ENCODE measurements at regions of chr16 and their contacts with region 1.

Region 1: DNA sequence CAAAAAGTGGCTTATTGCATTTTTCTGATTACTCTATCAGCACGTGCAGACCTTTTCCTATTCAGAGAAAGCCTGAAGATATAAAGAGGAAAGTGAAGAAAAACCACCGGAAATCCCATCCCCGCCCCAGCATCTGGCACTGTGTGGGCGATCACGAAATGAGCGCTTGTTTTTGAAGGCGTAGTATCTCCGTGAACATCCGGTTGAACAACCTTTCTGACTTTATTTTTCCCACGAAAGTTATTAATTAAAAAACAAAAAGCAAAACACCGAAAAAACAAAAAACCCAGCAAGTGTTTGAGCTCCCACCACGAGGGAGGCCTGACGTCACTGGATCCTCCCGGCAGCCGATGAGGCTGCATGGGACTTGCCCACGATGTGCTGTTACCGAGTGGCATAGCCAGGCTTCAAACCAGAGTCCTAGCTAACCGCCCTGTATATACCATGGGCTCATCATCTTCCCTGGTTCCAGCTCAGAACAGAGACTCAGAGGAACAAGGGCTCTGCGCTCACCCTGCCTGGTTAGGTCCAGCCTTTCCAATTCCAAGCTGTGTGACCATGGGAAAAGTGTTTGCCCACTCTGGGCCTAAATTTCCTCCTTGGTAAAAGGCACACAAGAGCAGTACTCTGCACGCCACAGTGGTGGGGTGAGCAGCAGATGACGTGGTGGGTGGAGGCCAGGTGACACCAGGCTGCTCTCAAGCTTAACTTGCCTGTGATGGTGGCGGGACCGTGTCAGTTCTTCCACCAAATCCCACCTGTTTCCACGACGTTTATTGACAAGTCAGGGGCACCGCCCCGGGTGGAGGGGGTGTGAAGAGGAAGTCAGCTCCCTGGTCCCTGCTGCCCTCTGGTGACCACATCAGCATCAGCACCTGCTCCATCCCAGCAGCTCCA is 34.3 kb upstream of the IL21R start:
- DNase-seq: peak; percentile 64 to 98 (median 93)
- ATAC-seq: peak; percentile 89
- H3K4me3 ChIP-seq: peak overlapping the region; percentile 45
- H3K4me3 Mint-ChIP-seq: peak overlapping the region; percentile 54 to 86 (median 73)
- H3K27ac ChIP-seq: peak overlapping the region; percentile 99
- H3K27ac Mint-ChIP-seq: peak overlapping the region in 7 of 9 donors; percentile 93 to 100 (median 99)
- H3K4me1 ChIP-seq: peaks cover 26 to 62% of the 10 kb centered on the region in 2 donors
- H3K4me1 Mint-ChIP-seq: peaks cover 15 to 80% (median 73%) of the 10 kb centered on the region in 7 donors
- H3K27me3 ChIP-seq: no peaks in the 10 kb centered on the region
- H3K27me3 Mint-ChIP-seq: no peaks in the 10 kb centered on the region

Region 2: GRCh38 chr16:27154705-27155521 is 212.8 kb before region 1 on chr16:
- CTCF ChIA-PET with region 1: interaction called, 24 read pairs
- POLR2A ChIA-PET with region 1: interaction called, 12 read pairs
- intact Hi-C with region 1: loop called in 1 of 2 experiments (anchors 1 kb)
- DNase-seq: peak; percentile 26 to 74 (median 56)
- ATAC-seq: peak; percentile 90
- H3K4me3 ChIP-seq: no peak overlapping the region
- H3K4me3 Mint-ChIP-seq: peak overlapping the region in 2 of 10 donors; percentile 3 to 16
- H3K27ac ChIP-seq: no peak overlapping the region
- H3K27ac Mint-ChIP-seq: peak overlapping the region in 7 of 9 donors; percentile 18 to 91 (median 61)
- H3K4me1 ChIP-seq: peaks cover 0 to 8% of the 10 kb centered on the region in 2 donors
- H3K4me1 Mint-ChIP-seq: peaks cover 6 to 28% (median 15%) of the 10 kb centered on the region in 7 donors
- H3K27me3 ChIP-seq: no peaks in the 10 kb centered on the region
- H3K27me3 Mint-ChIP-seq: no peaks in the 10 kb centered on the region

Region 3: GRCh38 chr16:27195941-27196595 is 171.6 kb before region 1 on chr16:
- CTCF ChIA-PET with region 1: interaction called, 6 read pairs
- POLR2A ChIA-PET with region 1: interaction called, 42 read pairs
- intact Hi-C with region 1: loop called in 1 of 2 experiments (anchors 1 kb)
- DNase-seq: peak in 7 of 9 donors; percentile 82 to 93 (median 90)
- ATAC-seq: peak; percentile 96
- H3K4me3 ChIP-seq: peak overlapping the region; percentile 41
- H3K4me3 Mint-ChIP-seq: peak overlapping the region; percentile 58 to 80 (median 72)
- H3K27ac ChIP-seq: peak overlapping the region; percentile 73
- H3K27ac Mint-ChIP-seq: peak overlapping the region; percentile 80 to 99 (median 95)
- H3K4me1 ChIP-seq: peaks cover 46 to 70% of the 10 kb centered on the region in 2 donors
- H3K4me1 Mint-ChIP-seq: peaks cover 52 to 83% (median 78%) of the 10 kb centered on the region in 7 donors
- H3K27me3 ChIP-seq: no peaks in the 10 kb centered on the region
- H3K27me3 Mint-ChIP-seq: no peaks in the 10 kb centered on the region

Region 4: DNA sequence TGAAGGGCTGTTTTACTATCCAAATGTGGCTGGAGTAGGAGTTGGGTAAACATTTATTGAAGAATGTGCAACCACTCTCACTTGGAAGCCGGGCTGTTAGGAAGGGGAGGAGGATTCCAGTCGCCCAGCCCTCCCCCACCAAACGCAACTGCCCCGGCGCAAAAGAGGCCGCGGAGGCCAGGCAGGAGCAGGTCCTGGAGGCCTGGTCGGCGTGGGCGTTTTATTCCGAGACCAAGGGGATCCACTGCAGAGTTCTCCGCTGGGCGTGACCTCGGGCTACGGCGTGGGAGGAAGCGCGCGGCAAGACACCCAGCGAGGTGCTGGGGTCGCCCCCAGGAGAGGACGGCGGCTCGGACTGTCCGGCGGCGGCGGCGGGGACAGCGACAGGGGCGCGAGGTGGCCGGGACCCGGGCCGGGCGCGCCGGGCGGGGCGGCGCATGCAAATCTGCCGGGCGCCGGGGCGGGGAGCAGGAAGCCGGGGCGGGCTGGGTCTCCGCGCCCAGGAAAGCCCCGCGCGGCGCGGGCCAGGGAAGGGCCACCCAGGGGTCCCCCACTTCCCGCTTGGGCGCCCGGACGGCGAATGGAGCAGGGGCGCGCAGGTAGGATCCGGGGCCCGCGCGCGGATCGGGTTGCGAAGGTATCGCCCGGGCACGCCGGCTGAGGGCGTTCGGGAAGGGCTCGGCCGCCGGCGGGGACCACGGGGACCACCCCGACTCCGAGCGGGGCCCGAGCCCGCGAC is 54.1 kb before region 1 on chr16 and contains the start of gene IL4R:
- CTCF ChIA-PET with region 1: interaction called, 3 read pairs
- POLR2A ChIA-PET with region 1: interaction called, 19 read pairs
- intact Hi-C with region 1: loop called (anchors 1 kb)
- DNase-seq: peak; percentile 55 to 84 (median 68)
- ATAC-seq: peak; percentile 72
- H3K4me3 ChIP-seq: peak within 1 kb of the TSS; percentile 73
- H3K4me3 Mint-ChIP-seq: peak within 1 kb of the TSS; percentile 87 to 99 (median 97)
- H3K27ac ChIP-seq: peak within 1 kb of the TSS; percentile 99
- H3K27ac Mint-ChIP-seq: peak within 1 kb of the TSS; percentile 92 to 99 (median 96)
- H3K4me1 ChIP-seq: peaks cover 17 to 33% of the 10 kb centered on the region in 2 donors
- H3K4me1 Mint-ChIP-seq: peaks cover 29 to 52% (median 42%) of the 10 kb centered on the region in 7 donors
- H3K27me3 ChIP-seq: no peaks in the 10 kb centered on the region
- H3K27me3 Mint-ChIP-seq: peaks cover 0 to 3% (median 0%) of the 10 kb centered on the region in 5 donors
- total RNA-seq, gene IL4R: 158 to 498 (median 198) TPM

Region 5: GRCh38 chr16:27355610-27356009 is 12.1 kb before region 1 on chr16:
- CTCF ChIA-PET with region 1: interaction called, 28 read pairs
- POLR2A ChIA-PET with region 1: interaction called, 10 read pairs
- intact Hi-C with region 1: no loop called
- DNase-seq: peak in 6 of 9 donors; percentile 25 to 44 (median 37)
- ATAC-seq: peak; percentile 80
- H3K4me3 ChIP-seq: no peak overlapping the region
- H3K4me3 Mint-ChIP-seq: no peak overlapping the region
- H3K27ac ChIP-seq: peak overlapping the region; percentile 29
- H3K27ac Mint-ChIP-seq: peak overlapping the region; percentile 1 to 93 (median 77)
- H3K4me1 ChIP-seq: no peaks in the 10 kb centered on the region
- H3K4me1 Mint-ChIP-seq: peaks cover 13 to 37% (median 25%) of the 10 kb centered on the region in 7 donors
- H3K27me3 ChIP-seq: no peaks in the 10 kb centered on the region
- H3K27me3 Mint-ChIP-seq: no peaks in the 10 kb centered on the region

Region 6: GRCh38 chr16:27455700-27456099 is 88.0 kb after region 1 on chr16:
- CTCF ChIA-PET with region 1: interaction called, 11 read pairs
- POLR2A ChIA-PET with region 1: interaction called, 7 read pairs
- intact Hi-C with region 1: loop called (anchors 1 to 2 kb)
- DNase-seq: peak in 6 of 9 donors; percentile 22 to 47 (median 32)
- ATAC-seq: peak; percentile 18
- H3K4me3 ChIP-seq: no peak overlapping the region
- H3K4me3 Mint-ChIP-seq: peak overlapping the region in 9 of 10 donors; percentile 3 to 75 (median 23)
- H3K27ac ChIP-seq: no peak overlapping the region
- H3K27ac Mint-ChIP-seq: peak overlapping the region; percentile 54 to 87 (median 79)
- H3K4me1 ChIP-seq: peaks cover 24 to 46% of the 10 kb centered on the region in 2 donors
- H3K4me1 Mint-ChIP-seq: peaks cover 30 to 75% (median 51%) of the 10 kb centered on the region in 7 donors
- H3K27me3 ChIP-seq: no peaks in the 10 kb centered on the region
- H3K27me3 Mint-ChIP-seq: no peaks in the 10 kb centered on the region

Region 7: GRCh38 chr16:27549859-27550581 is 182.3 kb after region 1 on chr16 and contains the starts of genes GTF3C1 and KATNIP:
- CTCF ChIA-PET with region 1: no interaction called
- POLR2A ChIA-PET with region 1: no interaction called
- intact Hi-C with region 1: loop called in 1 of 2 experiments (anchors 2 kb)
- DNase-seq: peak; percentile 100
- ATAC-seq: peak; percentile 100
- H3K4me3 ChIP-seq: peak within 1 kb of the TSS; percentile 100
- H3K4me3 Mint-ChIP-seq: peak within 1 kb of the TSS; percentile 95 to 98 (median 97)
- H3K27ac ChIP-seq: peak within 1 kb of the TSS; percentile 85
- H3K27ac Mint-ChIP-seq: peak within 1 kb of the TSS; percentile 94 to 99 (median 98)
- H3K4me1 ChIP-seq: peaks cover 21 to 22% of the 10 kb centered on the region in 2 donors
- H3K4me1 Mint-ChIP-seq: peaks cover 26 to 51% (median 44%) of the 10 kb centered on the region in 7 donors
- H3K27me3 ChIP-seq: no peaks in the 10 kb centered on the region
- H3K27me3 Mint-ChIP-seq: peaks cover 0 to 2% (median 0%) of the 10 kb centered on the region in 5 donors
- total RNA-seq, gene GTF3C1: 51.8 to 60.0 (median 52.6) TPM
- total RNA-seq, gene KATNIP: 18.7 to 39.0 (median 21.3) TPM

Measured in naive thymus-derived CD4-positive, alpha-beta T cell (primary cell).